ENCODE measurements at regions of chr6 and their contacts with region 1.

Region 1: GRCh38 chr6:166382933-166383801 is at the start of gene MPC1:
- DNase-seq: peak; percentile 95
- H3K4me3 Mint-ChIP-seq: peak within 1 kb of the TSS; percentile 91
- H3K27ac Mint-ChIP-seq: peak within 1 kb of the TSS; percentile 48
- H3K4me1 Mint-ChIP-seq: peaks cover 19% of the 10 kb centered on the region
- H3K27me3 Mint-ChIP-seq: peaks cover 8% of the 10 kb centered on the region
- total RNA-seq, gene MPC1: 17.3 and 19.1 TPM in 2 replicates

Region 2: GRCh38 chr6:166289207-166290060 is 93.7 kb before region 1 on chr6:
- intact Hi-C with region 1: loop called (anchors 5 kb)
- DNase-seq: no peak
- H3K4me3 Mint-ChIP-seq: no peak overlapping the region
- H3K27ac Mint-ChIP-seq: no peak overlapping the region
- H3K4me1 Mint-ChIP-seq: no peaks in the 10 kb centered on the region
- H3K27me3 Mint-ChIP-seq: peaks cover 12% of the 10 kb centered on the region

Region 3: DNA sequence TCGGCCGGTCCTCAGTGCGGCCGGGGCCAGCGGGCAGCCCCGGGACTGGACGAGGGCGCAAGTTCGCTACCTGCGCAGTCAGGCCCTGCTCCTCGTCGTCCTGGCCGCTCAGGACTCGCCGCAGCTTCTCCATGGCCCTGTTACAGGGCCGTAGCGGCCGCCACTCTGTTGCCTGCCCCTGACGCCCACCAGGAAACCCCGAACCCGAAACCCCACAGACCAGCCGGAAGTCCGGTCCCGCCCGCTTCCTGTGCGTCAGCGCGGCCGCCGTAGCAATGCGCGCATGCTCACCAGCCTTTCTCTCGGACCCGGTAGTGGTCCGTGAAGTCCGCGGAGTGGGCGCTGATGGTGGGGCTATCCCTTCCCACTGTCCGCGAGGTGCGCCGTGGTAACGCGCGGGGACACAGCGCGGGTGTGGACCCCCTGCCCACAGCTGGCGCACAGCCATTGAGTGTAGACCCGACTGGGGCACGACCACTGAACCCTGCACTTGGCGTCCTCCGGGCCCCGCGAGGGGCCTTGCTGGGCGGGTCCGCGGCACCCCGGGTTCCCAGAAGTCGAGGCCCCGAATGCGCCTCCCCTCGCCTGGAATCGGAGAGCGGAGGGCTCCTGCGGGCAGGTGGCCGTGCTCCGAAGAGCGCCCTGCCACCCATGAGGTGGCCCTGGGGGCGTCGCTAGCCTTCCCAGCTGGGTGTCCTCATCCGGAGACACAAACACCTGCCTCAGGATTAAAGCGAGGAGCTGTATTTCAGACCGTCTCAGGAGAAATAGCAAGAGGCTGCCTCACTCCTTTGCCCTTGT is 40.6 kb before region 1 on chr6 and contains the start of gene SFT2D1:
- intact Hi-C with region 1: loop called (anchors 1 kb)
- DNase-seq: peak; percentile 80
- H3K4me3 Mint-ChIP-seq: peak within 1 kb of the TSS; percentile 89
- H3K27ac Mint-ChIP-seq: peak within 1 kb of the TSS; percentile 88
- H3K4me1 Mint-ChIP-seq: peaks cover 18% of the 10 kb centered on the region
- H3K27me3 Mint-ChIP-seq: peaks cover 13% of the 10 kb centered on the region
- total RNA-seq, gene SFT2D1: 57.6 and 63.3 TPM in 2 replicates

Region 4: DNA sequence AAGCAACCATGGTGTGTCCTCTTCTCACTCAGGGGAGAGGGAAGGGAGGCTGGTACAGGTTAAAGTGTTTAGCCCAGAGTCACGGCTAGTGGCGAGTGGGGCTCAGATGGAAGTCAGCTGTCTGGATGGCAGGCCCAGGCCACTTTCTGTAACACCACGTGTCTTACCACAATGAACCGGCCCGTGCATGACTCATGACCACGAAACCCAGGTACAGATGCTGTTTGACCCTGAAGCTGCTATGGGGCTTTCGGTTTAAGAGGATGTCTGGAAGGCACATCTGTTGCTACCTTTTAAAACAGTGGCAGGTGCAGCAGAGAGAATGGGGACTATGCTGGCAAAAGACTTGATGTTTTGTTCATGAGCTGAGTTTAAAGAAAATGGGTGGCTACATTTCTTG is 36.1 kb after region 1 on chr6:
- intact Hi-C with region 1: loop called (anchors 2 kb)
- DNase-seq: peak; percentile 61
- H3K4me3 Mint-ChIP-seq: no peak overlapping the region
- H3K27ac Mint-ChIP-seq: no peak overlapping the region
- H3K4me1 Mint-ChIP-seq: peaks cover 62% of the 10 kb centered on the region
- H3K27me3 Mint-ChIP-seq: peaks cover 4% of the 10 kb centered on the region

Region 5: DNA sequence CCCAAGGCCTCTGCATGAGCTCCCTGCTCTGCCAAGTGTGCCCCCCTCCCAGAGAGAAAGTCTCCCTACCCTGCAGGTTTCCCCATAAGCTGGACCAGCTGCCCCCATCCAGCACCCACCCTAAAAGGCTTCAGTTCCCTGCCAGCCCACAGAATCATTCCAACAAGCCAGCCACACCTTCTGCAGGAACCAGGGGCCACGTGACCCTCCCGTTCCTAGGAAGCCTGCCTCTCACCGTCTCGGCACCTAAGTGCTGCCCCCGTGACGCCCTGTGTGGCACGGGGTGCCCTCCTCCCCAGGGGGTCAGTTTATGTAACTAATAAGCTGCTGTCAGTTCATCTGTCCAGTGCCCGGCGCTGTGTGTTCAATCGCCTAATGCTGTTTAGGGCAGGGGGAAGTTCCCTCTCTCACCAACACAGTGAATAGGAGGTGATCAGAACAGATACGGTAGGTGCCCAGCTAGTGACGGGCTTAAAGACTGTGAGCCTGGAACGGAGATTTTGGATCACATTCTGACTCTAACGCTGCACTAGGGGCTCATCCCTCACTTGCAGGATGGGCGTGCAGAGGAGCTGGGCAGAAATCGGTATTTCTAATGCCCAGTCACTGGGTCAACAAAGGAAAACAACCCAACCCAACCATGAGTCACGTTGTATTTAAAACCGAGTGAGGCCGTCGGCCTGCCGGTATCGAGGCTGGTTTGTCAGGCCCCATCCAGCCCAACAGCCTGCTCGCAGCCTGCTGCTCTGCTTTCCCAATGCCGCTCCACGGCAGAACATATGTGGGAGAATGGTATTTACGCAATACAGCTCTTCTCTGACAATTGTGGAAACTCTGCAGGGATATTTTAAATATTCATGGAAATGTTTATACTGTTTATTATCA is 147.3 kb after region 1 on chr6:
- intact Hi-C with region 1: no loop called
- DNase-seq: no peak
- H3K4me3 Mint-ChIP-seq: no peak overlapping the region
- H3K27ac Mint-ChIP-seq: no peak overlapping the region
- H3K4me1 Mint-ChIP-seq: no peaks in the 10 kb centered on the region
- H3K27me3 Mint-ChIP-seq: no peaks in the 10 kb centered on the region

Region 6: DNA sequence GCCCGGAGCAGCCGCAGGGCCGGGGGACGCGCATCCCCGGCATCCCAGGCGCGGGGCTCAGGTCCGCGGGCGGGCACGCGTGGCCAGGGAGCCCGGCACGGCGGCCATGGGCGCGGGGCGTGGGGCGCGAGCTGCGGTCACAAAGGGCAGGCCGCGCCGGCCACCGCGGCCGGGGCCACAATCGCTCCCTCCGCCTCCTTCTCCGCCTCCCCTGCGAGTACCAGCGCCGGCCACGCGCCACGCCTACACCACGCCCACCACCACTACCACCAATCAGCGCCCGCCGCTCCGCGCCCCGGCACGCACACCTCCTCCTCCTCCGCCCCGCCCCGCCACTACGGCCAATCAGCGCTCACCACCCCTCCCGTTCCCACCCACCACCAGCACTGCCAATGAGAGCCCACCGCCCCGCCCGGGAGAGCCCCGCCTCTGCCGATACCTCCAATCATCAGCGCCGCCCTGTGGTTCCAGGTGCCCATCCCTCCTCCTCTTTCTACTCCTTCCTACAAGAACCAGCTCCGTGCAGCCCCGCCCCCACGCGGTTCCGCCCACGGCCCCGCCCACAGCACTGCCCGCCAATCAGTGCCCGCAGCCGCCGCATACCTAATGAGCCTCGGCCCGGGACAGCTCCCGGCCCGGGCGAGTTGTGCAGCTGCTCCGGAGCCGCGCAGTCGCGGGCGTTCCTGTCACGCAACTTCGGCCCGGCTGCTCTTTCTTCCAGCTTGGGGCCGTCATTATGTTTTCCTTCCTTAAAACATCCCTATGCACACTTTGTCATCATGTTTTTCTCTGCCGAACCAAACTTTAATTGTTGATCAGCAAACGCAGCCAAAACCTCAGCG is 244.1 kb after region 1 on chr6 and contains the start of gene RPS6KA2:
- intact Hi-C with region 1: loop called (anchors 1 kb)
- DNase-seq: peak; percentile 100
- H3K4me3 Mint-ChIP-seq: peak within 1 kb of the TSS; percentile 87
- H3K27ac Mint-ChIP-seq: peak within 1 kb of the TSS; percentile 79
- H3K4me1 Mint-ChIP-seq: peaks cover 29% of the 10 kb centered on the region
- H3K27me3 Mint-ChIP-seq: peaks cover 48% of the 10 kb centered on the region
- total RNA-seq, gene RPS6KA2: 2.0 and 2.7 TPM in 2 replicates

Region 7: DNA sequence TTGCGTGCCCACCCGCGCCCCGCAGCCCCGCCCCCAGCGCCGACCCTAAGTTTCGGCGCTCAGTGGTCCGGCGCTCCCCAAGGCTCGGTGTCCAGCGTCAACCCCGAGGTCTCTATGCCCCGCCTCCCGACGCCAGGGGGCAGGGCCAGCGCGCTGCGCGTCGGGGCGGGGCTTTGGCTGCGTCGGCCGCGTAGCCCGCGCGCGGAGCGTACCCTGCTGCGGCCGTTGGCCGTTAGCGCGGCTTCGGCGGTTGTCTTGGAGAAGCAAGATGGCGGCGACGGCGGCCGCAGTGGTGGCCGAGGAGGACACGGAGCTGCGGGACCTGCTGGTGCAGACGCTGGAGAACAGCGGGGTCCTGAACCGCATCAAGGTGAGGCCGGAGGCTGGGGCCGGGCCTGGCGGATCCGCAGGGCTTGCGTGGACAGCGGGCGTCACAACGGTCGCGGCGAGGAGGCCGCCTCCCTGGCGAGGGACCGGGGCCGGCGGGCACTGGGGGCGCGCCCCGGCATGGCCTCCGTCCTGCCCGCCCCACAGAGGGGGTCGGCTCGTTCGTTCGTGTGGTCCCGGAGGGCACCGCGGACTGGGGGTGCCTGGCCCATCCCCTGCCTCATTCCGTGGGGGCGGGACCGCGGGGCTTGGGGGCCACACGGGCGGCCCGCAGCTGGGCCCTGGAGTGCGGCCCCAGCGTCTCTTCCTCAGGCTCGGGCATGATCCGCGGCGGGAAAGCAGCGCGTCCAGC is 616.1 kb after region 1 on chr6 and contains the start of gene CEP43:
- intact Hi-C with region 1: loop called (anchors 2 kb)
- DNase-seq: peak; percentile 88
- H3K4me3 Mint-ChIP-seq: peak within 1 kb of the TSS; percentile 90
- H3K27ac Mint-ChIP-seq: peak within 1 kb of the TSS; percentile 80
- H3K4me1 Mint-ChIP-seq: peaks cover 31% of the 10 kb centered on the region
- H3K27me3 Mint-ChIP-seq: no peaks in the 10 kb centered on the region
- total RNA-seq, gene CEP43: 18.8 and 21.4 TPM in 2 replicates